Left colon (tissue), 2 donors: ENCODE measurements at regions of chr4 and their contacts with region 1.

Region 1: DNA sequence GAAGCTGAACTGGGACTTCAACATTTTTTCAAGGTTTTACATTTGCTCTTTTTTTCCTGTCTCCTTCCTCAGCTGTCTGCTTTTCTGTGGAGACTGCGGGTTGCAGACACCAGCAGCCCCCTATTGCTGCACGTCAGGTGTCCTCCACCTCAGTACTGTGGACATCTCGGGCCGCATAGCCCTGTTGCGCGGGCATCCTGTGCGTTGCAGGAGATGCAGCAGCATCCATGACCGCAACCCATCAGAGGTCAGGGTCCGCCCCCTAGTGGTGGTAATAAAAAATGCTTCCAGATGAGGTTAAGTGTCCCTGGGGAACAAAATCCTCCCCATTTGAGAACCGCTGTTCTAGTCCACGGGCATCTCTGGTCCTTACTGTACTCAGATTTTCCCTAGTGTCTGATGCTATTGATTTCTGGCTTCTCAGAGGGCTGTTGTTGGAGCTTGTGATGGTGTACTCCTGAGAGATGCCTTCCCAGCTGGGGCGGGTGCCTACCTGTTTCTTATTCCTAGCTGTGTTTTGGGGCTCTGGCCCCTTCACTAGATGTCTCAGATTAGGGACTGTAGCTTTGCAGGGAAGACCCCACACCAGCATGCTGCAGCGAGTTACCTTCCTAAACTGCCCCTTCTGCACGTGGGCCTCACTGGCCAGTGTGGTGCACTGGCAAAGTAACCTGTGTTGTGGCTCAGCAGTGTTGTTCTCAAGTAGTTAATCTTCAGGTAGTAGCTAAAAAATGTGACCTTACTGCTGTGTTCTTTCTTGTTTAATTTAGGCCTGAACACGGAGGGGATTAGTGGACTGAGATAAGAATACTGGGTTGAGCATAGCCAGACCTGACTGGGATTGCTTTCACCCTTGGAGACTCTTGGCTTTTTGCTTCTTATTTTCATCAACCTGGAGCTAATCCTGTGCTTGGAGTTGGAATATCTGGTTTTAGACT is 28.2 kb downstream of the NSD2 start:
- DNase-seq: peak; percentile 61 to 70
- ATAC-seq: peak; percentile 89

Region 2: DNA sequence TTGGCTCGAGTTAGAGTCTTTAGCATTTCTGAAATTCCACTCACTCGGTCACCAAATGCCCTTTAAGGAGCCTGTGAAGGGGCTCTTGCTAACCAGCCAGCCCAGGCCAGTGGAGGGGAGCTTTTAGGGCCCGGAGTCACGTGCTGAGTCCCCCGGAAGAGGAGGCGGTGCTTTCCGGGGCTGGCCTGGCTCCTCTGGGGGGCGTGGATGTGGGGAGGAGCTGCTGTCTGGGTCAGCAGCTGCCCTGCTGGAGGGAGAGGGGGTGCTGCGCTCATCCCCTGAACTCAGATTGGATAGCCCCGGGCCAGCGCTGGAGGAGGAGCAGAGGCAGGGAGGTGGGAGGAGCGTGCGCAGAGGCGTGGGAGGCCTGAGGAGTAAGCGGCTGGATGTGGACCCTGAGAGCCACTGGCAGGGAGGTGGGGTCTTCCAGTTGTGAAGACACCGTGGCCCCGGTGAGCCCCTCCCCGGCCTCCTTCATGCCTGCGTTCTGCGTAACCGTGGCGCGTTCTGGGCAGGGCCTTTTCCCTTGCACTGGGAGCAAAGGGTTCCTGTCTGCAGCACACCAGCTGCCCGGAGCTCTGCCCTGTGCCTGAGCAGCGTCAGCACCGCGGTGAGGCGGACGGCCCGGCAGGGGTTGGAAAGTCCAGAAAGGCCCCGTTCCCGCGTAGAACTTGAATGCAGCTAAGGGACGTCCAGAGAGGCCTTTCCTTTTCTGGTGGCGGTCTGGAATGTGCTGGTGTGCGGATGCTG is 590.0 kb before region 1 on chr4:
- intact Hi-C with region 1: no loop called
- DNase-seq: peak; percentile 65 to 84
- ATAC-seq: peak; percentile 29

Region 3: GRCh38 chr4:1567803-1568581 is 331.4 kb before region 1 on chr4:
- intact Hi-C with region 1: no loop called
- DNase-seq: peak in 1 of 2 donors; percentile 36
- ATAC-seq: no peak

Region 4: GRCh38 chr4:1752284-1753041 is 147.0 kb before region 1 on chr4:
- intact Hi-C with region 1: loop called in 1 of 2 experiments (anchors 5 kb)
- DNase-seq: peak in 1 of 2 donors; percentile 44
- ATAC-seq: peak; percentile 53